Activated B cell treated with CpG ODN at 0.5 μM for 24 hours (primary cell): ENCODE measurements at regions of chr1 and their contacts with region 1.

Region 1: DNA sequence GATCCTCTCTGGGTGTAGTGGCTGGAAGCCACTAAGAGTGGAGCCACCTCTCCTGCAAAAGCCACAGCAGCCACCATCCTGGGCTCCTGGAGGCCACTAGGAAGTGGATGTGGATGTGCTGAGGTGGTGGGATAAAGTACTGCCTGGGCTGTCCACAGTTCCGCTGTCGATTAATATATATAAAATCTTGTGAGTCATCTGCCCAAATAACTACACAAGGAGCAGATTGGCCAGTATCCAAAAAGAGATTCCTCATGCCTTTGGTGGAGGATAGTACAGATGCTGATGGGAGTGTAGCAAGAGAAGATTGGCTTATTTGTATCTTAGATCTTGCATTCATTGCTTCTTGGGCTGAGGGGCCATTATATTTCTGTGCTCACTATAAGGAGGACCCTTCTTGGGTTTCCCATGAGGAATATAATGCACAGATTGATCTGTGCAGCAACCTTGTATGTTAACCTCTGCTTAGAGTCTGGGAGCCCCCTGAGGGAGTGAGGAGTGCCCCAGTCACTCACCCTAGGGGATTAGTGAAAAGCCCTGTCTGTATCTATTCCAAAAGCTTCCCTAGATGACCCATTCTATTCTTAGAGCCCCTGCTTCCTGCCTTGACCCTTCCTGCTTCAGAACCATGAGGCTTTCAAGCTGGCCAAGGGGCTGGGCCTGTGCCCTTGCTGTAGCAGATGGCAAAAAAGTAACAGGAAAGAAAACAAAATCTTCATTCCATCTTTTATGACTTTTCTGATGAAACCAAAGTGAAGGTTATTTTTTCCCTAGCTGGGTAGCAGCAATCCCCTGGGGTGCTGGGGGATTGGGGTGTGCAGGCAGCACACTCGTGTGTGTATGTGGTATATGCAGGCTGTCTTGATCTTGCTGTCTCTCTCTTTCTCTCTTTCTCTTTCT is 31.7 kb downstream of the RCSD1 start:
- DNase-seq: no peak
- ATAC-seq: no peak
- H3K4me3 Mint-ChIP-seq: peak overlapping the region; percentile 6
- H3K27ac Mint-ChIP-seq: peak overlapping the region; percentile 79
- H3K4me1 Mint-ChIP-seq: peaks cover 100% of the 10 kb centered on the region
- H3K27me3 Mint-ChIP-seq: no peaks in the 10 kb centered on the region
- CTCF ChIP-seq: no peak

Region 2: GRCh38 chr1:167185974-167186657 is 475.7 kb before region 1 on chr1:
- CTCF ChIA-PET with region 1: no interaction called
- POLR2A ChIA-PET with region 1: no interaction called
- intact Hi-C with region 1: no loop called
- DNase-seq: no peak
- ATAC-seq: no peak
- H3K4me3 Mint-ChIP-seq: no peak overlapping the region
- H3K27ac Mint-ChIP-seq: no peak overlapping the region
- H3K4me1 Mint-ChIP-seq: no peaks in the 10 kb centered on the region
- H3K27me3 Mint-ChIP-seq: peaks cover 10% of the 10 kb centered on the region
- CTCF ChIP-seq: no peak

Region 3: DNA sequence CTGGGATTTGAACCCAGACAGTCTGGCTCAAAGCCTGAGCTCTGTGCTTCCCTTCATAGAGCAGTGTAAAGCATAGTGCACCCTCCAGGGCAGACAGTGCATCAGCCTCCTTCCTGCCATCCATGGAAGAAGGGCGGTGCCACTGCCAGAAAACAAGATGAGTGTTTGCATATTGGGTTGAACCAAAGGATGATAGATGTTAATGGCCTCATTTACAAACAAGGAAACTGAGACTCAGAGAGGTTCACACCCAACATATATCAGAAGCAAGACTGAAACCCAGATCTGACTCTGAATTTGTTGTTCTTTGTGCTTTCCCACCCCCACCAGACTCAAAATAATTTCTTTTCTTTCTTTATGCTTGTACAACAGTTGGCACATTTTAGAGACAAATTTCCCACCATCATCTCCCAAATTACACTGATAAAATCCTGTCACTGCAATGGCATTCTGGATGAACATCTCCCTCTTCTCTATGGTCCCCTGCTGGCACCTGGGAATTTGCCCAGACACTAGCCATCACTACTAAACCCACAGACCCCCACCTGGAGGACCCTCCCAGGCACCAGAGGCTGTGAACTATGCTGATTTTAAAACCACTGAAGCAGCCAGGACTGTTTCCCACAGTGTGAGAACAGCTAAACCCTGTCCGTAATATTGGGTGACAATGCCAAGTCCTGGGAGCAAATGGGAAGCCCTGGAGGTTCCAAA is 14.6 kb after region 1 on chr1:
- CTCF ChIA-PET with region 1: no interaction called
- POLR2A ChIA-PET with region 1: interaction called, 5 read pairs
- intact Hi-C with region 1: loop called (anchors 2 kb)
- DNase-seq: no peak
- ATAC-seq: no peak
- H3K4me3 Mint-ChIP-seq: peak overlapping the region; percentile 2
- H3K27ac Mint-ChIP-seq: peak overlapping the region; percentile 86
- H3K4me1 Mint-ChIP-seq: peaks cover 34% of the 10 kb centered on the region
- H3K27me3 Mint-ChIP-seq: no peaks in the 10 kb centered on the region
- CTCF ChIP-seq: no peak